Mammary epithelial cell (primary cell): ENCODE measurements at regions of chr7 and their contacts with region 1.

Region 1: GRCh38 chr7:48424731-48425130 is 253.5 kb downstream of the ABCA13 start:
- DNase-seq: peak; percentile 48
- H3K4me3 ChIP-seq: no peak overlapping the region
- H3K27ac ChIP-seq: no peak overlapping the region
- H3K4me1 ChIP-seq: peaks cover 56% of the 10 kb centered on the region
- H3K27me3 ChIP-seq: no peaks in the 10 kb centered on the region
- CTCF ChIP-seq: peak; percentile 89 to 94

Region 2: GRCh38 chr7:48274662-48275061 is 150.1 kb before region 1 on chr7:
- CTCF ChIA-PET with region 1: no interaction called
- dilution Hi-C with region 1: no loop called
- in situ Hi-C with region 1: no loop called
- intact Hi-C with region 1: no loop called
- DNase-seq: peak; percentile 63
- H3K4me3 ChIP-seq: no peak overlapping the region
- H3K27ac ChIP-seq: no peak overlapping the region
- H3K4me1 ChIP-seq: peaks cover 16% of the 10 kb centered on the region
- H3K27me3 ChIP-seq: no peaks in the 10 kb centered on the region
- CTCF ChIP-seq: no peak

Region 3: GRCh38 chr7:48337012-48337621 is 87.6 kb before region 1 on chr7:
- CTCF ChIA-PET with region 1: no interaction called
- dilution Hi-C with region 1: no loop called
- in situ Hi-C with region 1: no loop called
- intact Hi-C with region 1: loop called (anchors 5 kb)
- DNase-seq: peak; percentile 28
- H3K4me3 ChIP-seq: no peak overlapping the region
- H3K27ac ChIP-seq: no peak overlapping the region
- H3K4me1 ChIP-seq: no peaks in the 10 kb centered on the region
- H3K27me3 ChIP-seq: no peaks in the 10 kb centered on the region
- CTCF ChIP-seq: peak; percentile 77 to 87

Region 4: GRCh38 chr7:48637382-48637781 is 212.7 kb after region 1 on chr7:
- CTCF ChIA-PET with region 1: no interaction called
- dilution Hi-C with region 1: no loop called
- in situ Hi-C with region 1: no loop called
- intact Hi-C with region 1: loop called (anchors 5 kb)
- DNase-seq: peak; percentile 61
- H3K4me3 ChIP-seq: no peak overlapping the region
- H3K27ac ChIP-seq: peak overlapping the region; percentile 18
- H3K4me1 ChIP-seq: peaks cover 22% of the 10 kb centered on the region
- H3K27me3 ChIP-seq: no peaks in the 10 kb centered on the region
- CTCF ChIP-seq: no peak

Region 5: DNA sequence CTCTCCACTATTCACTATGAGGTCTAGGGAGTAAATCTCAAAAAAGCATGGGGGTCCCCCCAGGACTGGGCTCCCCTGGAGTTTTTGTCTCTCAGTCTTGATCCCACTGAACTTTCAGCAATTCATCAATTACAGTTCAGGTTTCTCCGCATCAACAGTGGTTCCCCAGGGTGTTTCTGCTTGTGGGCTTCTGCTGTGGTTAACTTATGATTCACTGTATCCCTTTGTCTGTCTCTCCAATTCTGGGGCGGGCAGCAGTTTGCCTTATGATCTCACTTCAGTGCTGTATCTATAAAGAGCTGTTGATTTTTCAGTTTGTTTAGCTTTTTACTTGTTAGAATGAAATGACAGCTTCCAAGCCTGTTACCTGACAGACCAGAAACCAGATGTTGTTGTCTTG is 357.1 kb after region 1 on chr7:
- CTCF ChIA-PET with region 1: no interaction called
- dilution Hi-C with region 1: no loop called
- in situ Hi-C with region 1: no loop called
- intact Hi-C with region 1: loop called (anchors 10 kb)
- DNase-seq: peak; percentile 70
- H3K4me3 ChIP-seq: no peak overlapping the region
- H3K27ac ChIP-seq: no peak overlapping the region
- H3K4me1 ChIP-seq: no peaks in the 10 kb centered on the region
- H3K27me3 ChIP-seq: no peaks in the 10 kb centered on the region
- CTCF ChIP-seq: no peak

Region 6: GRCh38 chr7:48992816-48993215 is 568.1 kb after region 1 on chr7:
- CTCF ChIA-PET with region 1: no interaction called
- dilution Hi-C with region 1: no loop called
- in situ Hi-C with region 1: no loop called
- intact Hi-C with region 1: loop called (anchors 10 kb)
- DNase-seq: no peak
- H3K4me3 ChIP-seq: no peak overlapping the region
- H3K27ac ChIP-seq: no peak overlapping the region
- H3K4me1 ChIP-seq: no peaks in the 10 kb centered on the region
- H3K27me3 ChIP-seq: peaks cover 1% of the 10 kb centered on the region
- CTCF ChIP-seq: no peak